ENCODE measurements at regions of chr22 and their contacts with region 1.

Region 1: DNA sequence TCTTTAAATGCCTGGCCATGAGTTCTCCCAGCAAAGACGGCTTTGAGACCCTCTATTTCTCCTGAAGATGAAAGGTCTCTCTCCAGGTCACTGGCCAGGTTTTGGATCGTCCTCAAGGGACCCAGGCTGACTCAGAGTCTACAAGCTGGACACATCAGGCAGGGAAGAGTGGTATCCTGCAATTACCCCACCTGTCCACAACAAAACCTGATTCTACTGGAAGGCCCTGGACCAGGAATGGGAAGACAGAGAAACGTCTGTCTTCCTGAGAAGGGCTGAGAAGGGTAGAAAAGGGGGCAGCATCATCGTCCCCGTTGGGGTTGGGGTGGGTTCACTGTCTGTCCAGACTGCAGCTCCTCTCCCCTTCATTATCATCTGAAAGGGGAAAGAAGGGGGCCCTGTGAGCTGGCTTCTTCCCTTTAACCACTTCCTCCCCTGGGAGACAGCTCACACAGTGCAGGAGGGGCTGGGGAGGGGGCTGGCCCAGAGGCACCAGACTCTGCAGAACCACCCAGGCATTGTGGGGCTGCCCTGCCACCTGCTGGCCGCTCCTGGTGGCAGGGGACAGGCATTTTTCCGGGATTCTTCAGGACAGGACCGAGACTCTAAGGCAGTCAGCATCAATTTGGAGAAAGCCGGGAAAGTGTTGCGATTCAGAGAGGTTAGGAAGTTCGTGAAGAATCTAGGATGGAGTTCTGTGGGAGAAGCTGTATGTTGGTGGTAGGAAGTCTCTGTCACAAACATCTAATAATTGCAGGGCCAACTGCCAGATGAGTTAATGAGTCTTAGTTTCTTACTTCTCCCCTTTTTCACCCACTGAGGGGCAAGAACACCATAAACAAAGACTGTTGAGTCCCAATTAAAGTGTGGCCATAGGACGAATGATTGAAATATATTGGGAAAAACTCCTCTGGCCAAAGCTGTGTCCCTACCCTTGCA is 57.6 kb downstream of the SYN3 start:
- DNase-seq: no peak
- H3K4me3 ChIP-seq: no peak overlapping the region
- H3K27ac ChIP-seq: no peak overlapping the region
- H3K4me1 ChIP-seq: peaks cover 0 to 7% (median 0%) of the 10 kb centered on the region in 6 donors
- H3K27me3 ChIP-seq: no peaks in the 10 kb centered on the region
- CTCF ChIP-seq: peak in 10 of 11 experiments; percentile 59 to 88 (median 76)
- POLR2A ChIP-seq: no peak

Region 2: GRCh38 chr22:32528984-32529982 is 471.3 kb before region 1 on chr22:
- intact Hi-C with region 1: loop called (anchors 5 kb)
- DNase-seq: peak; percentile 89
- H3K4me3 ChIP-seq: no peak overlapping the region
- H3K27ac ChIP-seq: peak overlapping the region; percentile 45 to 90 (median 77)
- H3K4me1 ChIP-seq: peaks cover 5 to 57% (median 23%) of the 10 kb centered on the region in 6 donors
- H3K27me3 ChIP-seq: peaks cover 0 to 24% (median 0%) of the 10 kb centered on the region in 7 donors
- CTCF ChIP-seq: peak; percentile 74 to 93 (median 85)
- POLR2A ChIP-seq: no peak

Region 3: GRCh38 chr22:32649515-32650200 is 351.0 kb before region 1 on chr22:
- intact Hi-C with region 1: loop called (anchors 10 kb)
- DNase-seq: no peak
- H3K4me3 ChIP-seq: no peak overlapping the region
- H3K27ac ChIP-seq: no peak overlapping the region
- H3K4me1 ChIP-seq: peaks cover 0 to 8% (median 4%) of the 10 kb centered on the region in 6 donors
- H3K27me3 ChIP-seq: no peaks in the 10 kb centered on the region
- CTCF ChIP-seq: no peak
- POLR2A ChIP-seq: no peak

Region 4: DNA sequence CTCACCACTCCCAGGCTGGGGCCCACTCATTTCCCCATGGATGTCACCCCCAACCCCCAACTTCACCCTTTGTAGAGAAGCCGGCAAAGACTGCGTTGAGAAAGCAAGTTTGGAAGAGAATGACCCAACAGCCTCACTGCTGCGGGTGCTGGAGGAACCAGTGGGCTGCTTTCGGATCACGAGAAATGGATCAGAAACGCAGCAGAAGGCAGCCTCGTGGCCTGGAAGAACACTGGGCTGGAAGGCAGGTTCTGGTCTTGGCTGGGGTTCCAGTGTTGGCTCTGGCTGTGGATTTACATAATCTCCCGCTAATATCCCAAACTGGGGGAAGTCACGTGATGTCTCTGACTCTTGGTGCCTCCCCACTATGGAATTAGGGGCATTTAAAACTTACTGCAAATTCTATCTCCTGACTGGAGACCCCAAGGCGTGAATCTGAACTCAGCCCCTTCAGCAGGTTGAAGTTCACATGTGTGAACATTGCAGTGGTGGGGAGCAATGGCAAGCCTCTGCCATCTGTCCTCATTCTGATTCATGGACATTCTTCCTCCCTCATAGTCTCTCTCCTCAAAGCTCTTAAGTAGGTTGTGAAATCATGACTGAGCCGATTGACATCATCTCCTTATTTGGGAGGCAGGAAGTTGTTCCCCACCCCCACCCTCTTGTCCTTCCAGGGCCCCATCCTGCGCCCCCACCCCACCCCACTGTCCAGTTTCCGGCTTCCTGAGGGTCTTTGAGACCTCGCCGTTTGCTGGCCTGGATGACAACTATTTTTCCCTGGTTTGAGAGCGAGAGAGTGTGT is 236.1 kb before region 1 on chr22:
- intact Hi-C with region 1: no loop called
- DNase-seq: no peak
- H3K4me3 ChIP-seq: no peak overlapping the region
- H3K27ac ChIP-seq: peak overlapping the region; percentile 36 to 83 (median 66)
- H3K4me1 ChIP-seq: peaks cover 0 to 39% (median 13%) of the 10 kb centered on the region in 6 donors
- H3K27me3 ChIP-seq: peaks cover 0 to 38% (median 0%) of the 10 kb centered on the region in 7 donors
- CTCF ChIP-seq: no peak
- POLR2A ChIP-seq: no peak